ENCODE measurements at regions of chr1 and their contacts with region 1.

Region 1: GRCh38 chr1:182446033-182446669 is 3.8 kb upstream of the RGSL1 start:
- DNase-seq: no peak
- ATAC-seq: no peak
- H3K4me3 ChIP-seq: no peak overlapping the region
- H3K27ac ChIP-seq: no peak overlapping the region
- H3K4me1 ChIP-seq: no peaks in the 10 kb centered on the region
- H3K27me3 ChIP-seq: no peaks in the 10 kb centered on the region

Region 2: DNA sequence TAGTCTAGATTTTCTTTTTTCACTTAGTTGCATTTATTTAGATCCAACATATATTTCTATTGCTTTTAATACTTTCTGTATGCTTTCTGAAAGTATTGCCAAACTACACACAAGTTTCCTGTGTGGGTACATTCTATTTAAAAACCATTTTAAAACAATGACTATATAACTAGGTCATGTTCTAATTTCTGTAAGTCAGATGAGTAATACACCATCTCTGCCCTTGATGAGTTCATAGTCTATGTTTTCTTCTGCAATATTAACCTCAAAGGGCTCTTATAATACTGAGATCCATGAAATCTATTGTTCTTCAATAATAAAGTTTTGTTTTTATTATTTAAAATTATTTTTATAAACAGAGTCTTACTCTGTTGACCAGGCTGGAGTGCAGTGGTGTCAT is 74.6 kb after region 1 on chr1:
- intact Hi-C with region 1: no loop called
- DNase-seq: no peak
- ATAC-seq: no peak
- H3K4me3 ChIP-seq: no peak overlapping the region
- H3K27ac ChIP-seq: no peak overlapping the region
- H3K4me1 ChIP-seq: no peaks in the 10 kb centered on the region
- H3K27me3 ChIP-seq: no peaks in the 10 kb centered on the region

Region 3: DNA sequence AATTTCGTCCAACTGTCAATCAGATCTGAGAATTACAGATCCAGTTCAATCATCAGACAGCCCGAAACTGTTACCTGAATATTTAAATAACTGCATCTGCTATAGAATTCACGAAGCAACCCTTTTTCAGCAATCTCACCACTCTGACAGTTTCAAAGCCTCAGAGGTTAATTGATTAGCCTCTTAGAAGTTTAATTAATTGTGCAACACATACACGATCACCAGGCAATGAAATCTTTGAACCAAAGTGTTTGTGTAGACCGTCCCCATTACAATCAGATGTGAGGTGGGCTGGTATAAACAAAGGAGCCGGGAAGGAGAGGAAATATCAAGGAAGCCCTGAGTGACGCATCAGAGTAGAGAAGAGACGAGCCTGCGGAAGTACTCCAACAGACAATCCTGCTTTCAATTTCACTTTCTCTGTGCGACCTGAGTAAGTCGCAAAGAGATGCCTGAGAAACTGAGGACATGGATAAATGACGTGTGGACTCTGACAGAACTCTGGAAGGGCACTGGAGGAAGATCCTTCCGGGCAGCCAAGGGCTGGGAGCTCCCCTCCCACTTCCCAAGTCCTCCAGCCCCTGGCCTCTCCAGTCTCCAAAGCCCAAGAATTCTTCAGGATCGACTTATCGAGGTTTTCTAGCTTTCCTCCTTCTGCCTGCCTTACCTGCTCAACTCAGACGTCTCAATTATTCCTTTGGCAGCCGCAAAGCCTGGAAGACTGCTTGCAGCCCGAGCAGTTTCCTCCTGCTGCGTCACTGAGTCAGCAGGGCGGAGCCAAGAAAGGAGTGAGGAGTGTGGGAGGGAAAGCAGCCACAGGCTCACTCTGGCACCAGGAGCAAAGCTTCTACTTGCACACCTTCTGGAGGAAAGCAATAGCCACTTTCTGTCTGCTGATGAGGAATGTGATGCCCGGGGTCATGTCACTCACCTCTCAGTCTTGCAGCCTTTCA is 142.6 kb after region 1 on chr1 and contains the start of gene RNASEL:
- intact Hi-C with region 1: loop called in 3 of 4 experiments (anchors 10 kb)
- DNase-seq: peak; percentile 80 to 89 (median 87)
- ATAC-seq: peak; percentile 94 to 95
- H3K4me3 ChIP-seq: peak within 1 kb of the TSS; percentile 66
- H3K27ac ChIP-seq: peak within 1 kb of the TSS; percentile 68
- H3K4me1 ChIP-seq: peaks cover 3% of the 10 kb centered on the region
- H3K27me3 ChIP-seq: no peaks in the 10 kb centered on the region
- total RNA-seq, gene RNASEL: 3.7 to 5.7 (median 5.4) TPM

Region 4: DNA sequence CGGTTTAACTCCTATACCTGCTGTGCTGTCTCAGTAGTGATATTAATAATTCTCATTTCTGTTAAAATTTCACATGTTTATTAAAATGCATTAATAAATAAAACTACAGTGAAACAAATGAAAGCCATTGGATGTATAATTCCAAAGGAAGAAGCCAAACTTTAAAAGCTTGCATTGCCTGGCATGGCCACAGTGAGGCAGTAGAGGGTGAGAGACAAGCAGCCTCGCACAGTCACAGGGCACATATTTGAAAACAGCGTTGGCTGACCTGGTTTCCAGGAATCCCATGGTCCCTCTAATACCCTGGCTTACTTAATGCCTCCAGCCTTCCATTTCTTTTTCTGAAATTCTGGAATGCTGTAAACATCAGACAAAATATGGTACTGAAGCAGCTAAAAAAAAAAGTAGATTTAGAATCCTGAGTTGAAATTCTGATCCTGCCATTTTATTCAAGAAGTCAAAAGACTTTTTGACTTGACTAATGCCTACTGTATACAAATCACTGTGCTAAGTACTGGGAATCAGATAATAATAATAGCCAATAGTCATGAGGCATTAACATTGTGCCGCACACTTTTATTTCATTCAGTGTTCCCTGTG is 149.6 kb after region 1 on chr1:
- intact Hi-C with region 1: loop called in 2 of 4 experiments (anchors 10 kb)
- DNase-seq: peak; percentile 63 to 76 (median 74)
- ATAC-seq: peak; percentile 70 to 78
- H3K4me3 ChIP-seq: no peak overlapping the region
- H3K27ac ChIP-seq: no peak overlapping the region
- H3K4me1 ChIP-seq: no peaks in the 10 kb centered on the region
- H3K27me3 ChIP-seq: no peaks in the 10 kb centered on the region

Region 5: GRCh38 chr1:182781841-182782586 is 335.9 kb after region 1 on chr1:
- intact Hi-C with region 1: loop called in 2 of 4 experiments (anchors 5 to 10 kb)
- DNase-seq: peak; percentile 64 to 85 (median 85)
- ATAC-seq: peak; percentile 63 to 72
- H3K4me3 ChIP-seq: no peak overlapping the region
- H3K27ac ChIP-seq: no peak overlapping the region
- H3K4me1 ChIP-seq: no peaks in the 10 kb centered on the region
- H3K27me3 ChIP-seq: no peaks in the 10 kb centered on the region

Region 6: DNA sequence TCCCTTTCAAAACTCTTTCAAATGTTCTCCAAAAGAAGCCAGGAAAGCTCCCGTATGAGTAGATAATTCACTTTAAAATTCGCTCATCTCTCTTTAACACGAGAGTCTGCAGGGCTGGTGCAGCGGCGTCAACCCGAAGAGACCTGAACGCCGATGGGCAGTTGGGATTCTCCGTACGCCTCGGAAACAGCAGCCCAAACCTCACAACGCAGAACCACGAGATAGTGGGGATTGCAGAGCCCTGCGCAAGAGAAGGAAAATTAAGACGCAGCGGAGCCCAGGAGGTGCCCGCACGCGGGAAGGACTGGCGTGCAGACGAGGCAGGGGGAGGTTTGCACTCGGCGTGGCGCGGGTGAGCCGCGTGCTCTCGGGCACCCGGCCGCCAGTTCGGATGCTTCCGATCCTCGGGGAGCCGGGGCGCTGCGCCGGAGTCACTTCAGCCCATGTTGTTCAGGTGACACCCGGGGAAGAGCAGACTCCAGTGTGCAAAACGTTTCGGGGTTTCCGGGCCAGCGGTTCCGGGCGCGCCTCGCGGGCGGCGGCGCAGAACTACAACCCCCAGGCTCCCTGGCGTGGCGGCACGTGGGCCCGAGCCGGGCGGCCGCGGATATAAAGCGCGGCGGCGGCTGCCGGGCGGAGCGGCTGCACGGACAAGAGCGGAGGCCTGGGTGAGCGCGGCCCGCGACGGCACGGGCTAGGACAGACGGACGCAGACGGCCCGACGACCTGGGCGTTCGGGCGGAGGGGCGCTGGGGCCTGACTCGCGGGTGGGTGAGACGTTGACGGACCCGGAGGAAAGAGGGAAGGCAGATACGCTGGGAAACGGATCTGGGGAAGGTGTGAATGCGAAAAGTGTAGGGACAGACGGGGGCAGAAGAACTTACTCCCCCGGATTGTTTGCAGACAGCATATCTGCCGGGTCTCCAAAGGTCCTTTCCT is 343.3 kb after region 1 on chr1 and contains the start of gene NPL:
- intact Hi-C with region 1: loop called in 2 of 4 experiments (anchors 5 to 10 kb)
- DNase-seq: peak; percentile 85 to 95 (median 94)
- ATAC-seq: peak; percentile 98
- H3K4me3 ChIP-seq: peak within 1 kb of the TSS; percentile 51
- H3K27ac ChIP-seq: no peak within 1 kb of the TSS
- H3K4me1 ChIP-seq: no peaks in the 10 kb centered on the region
- H3K27me3 ChIP-seq: no peaks in the 10 kb centered on the region
- total RNA-seq, gene NPL: 5.8 to 9.6 (median 9.4) TPM

Measured in right cardiac atrium (tissue), 5 donors.